HEK293 (cell line): ENCODE measurements at regions of chr17 and their contacts with region 1.

Region 1: DNA sequence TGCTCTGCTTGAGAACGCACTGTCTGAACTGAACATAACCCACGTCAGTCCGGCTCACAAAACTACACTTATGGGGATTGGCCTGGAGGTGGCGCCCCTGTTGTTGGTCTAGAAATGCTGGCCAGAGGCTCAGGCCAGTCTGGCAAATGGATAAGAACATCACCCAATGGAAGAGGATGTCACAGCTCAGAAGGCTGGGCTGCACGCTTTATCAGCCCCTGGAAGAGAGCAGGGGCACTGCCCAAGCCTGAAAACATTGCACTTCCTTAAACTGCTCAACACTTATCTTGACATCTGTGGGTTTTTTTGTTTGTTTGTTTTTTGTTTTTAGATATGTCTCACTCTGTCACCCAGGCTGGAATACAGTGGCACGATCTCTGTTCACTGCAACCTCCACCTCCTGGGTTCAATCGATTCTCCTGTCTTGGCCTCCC is 24.8 kb upstream of the BPTF start:
- H3K4me3 ChIP-seq: no peak overlapping the region
- H3K27ac ChIP-seq: no peak overlapping the region
- H3K4me1 ChIP-seq: no peaks in the 10 kb centered on the region
- CTCF ChIP-seq: peak; percentile 39; the same call in 1 of the 2 replicates

Region 2: DNA sequence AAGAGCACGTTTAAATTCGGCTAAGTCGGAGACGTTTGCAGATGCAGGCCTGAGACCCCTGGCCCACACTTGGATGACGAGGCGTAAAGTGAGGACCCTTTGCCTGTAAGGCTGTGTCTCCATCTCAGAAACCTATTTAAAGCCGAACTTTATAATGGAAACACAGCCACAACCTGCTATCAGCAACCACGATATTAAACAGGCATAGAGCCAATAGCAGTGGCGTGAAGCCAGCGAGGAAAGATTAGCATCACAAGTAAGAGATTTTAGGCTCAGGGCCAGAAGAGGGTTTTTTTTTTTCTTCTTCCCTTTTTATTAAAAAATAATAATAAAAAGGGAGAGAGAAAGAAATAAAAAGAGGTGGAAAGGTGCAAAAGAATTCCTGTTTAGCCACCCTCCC is 194.0 kb before region 1 on chr17:
- CTCF ChIA-PET with region 1: no interaction called
- POLR2A ChIA-PET with region 1: no interaction called
- H3K4me3 ChIP-seq: no peak overlapping the region
- H3K27ac ChIP-seq: no peak overlapping the region
- H3K4me1 ChIP-seq: peaks cover 13% of the 10 kb centered on the region
- CTCF ChIP-seq: no peak

Region 3: GRCh38 chr17:67682196-67682595 is 118.3 kb before region 1 on chr17:
- CTCF ChIA-PET with region 1: no interaction called
- POLR2A ChIA-PET with region 1: no interaction called
- H3K4me3 ChIP-seq: no peak overlapping the region
- H3K27ac ChIP-seq: no peak overlapping the region
- H3K4me1 ChIP-seq: no peaks in the 10 kb centered on the region
- CTCF ChIP-seq: no peak

Region 4: DNA sequence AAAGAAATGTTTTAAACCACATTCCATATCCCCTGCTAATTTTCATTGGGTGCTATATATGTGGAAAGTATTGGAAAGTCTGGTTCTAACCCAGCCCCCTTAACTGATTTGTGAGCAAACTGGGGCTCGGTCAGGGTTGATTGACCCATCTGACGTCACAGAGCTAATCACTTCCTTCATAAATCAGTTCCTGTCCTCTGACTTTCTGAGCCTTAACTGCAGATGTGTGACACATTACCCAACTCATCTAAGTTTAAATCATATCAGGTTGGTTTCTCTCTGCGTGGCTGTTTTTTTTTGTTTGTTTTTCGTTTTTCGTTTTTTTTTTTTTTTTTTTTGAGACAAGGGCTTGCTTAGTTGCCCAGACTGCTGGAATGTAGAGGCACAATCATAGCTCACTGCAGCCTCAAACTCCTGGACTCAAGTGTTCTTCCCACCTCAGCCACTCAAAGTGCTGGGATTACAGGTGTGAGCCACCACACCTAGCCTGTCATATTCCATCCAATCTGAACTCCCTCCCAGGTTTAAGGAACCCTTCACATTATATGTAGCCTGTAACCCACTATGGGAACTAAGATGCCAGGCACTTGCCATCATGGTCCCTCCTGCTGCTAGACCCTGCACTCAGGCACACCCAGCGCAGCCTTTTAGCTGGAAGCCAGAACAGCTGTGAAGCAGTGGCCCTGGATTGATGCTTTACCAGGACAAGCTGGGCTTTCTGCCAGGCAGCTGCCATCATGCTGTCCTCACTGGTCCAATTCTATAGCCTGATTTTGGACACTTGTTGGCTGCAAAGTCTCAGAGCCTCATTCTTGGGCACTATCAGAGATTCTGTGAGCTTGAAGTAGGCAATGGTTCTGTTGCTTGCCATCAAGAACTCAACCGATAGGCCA is 17.8 kb after region 1 on chr17:
- CTCF ChIA-PET with region 1: interaction called, 20 read pairs
- POLR2A ChIA-PET with region 1: no interaction called
- H3K4me3 ChIP-seq: no peak overlapping the region
- H3K27ac ChIP-seq: no peak overlapping the region
- H3K4me1 ChIP-seq: no peaks in the 10 kb centered on the region
- CTCF ChIP-seq: no peak

Region 5: GRCh38 chr17:67824735-67825626 is 24.5 kb after region 1 on chr17 and contains the start of gene BPTF:
- CTCF ChIA-PET with region 1: interaction called, 9 read pairs
- POLR2A ChIA-PET with region 1: interaction called, 10 read pairs
- H3K4me3 ChIP-seq: peak within 1 kb of the TSS; percentile 72
- H3K27ac ChIP-seq: peak within 1 kb of the TSS; percentile 87
- H3K4me1 ChIP-seq: peaks cover 10% of the 10 kb centered on the region
- CTCF ChIP-seq: peak; percentile 63

Region 6: DNA sequence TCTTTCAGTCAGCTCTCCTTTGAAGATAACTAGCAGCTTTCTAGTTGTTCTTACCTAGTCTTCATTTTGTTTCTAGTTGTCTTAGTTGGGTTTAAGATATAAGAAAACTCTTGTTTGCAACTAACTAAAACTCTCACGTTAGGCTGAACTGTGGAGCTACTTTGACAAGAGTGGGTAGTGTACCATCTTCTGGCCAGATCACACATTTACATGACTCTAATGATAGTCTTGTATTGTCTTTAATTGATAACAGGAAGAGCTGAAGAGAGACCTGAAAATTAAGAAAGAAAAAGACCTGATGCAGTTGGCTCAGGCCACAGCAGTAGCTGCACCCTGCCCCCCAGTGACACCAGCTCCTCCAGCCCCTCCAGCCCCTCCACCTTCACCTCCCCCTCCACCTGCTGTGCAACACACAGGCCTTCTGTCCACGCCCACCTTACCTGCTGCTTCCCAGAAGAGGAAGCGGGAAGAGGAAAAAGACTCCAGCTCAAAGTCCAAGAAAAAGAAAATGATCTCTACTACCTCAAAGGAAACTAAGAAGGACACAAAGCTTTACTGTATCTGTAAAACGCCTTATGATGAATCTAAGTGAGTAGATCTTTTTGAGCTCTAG is 158.9 kb after region 1 on chr17:
- CTCF ChIA-PET with region 1: interaction called, 13 read pairs
- POLR2A ChIA-PET with region 1: no interaction called
- H3K4me3 ChIP-seq: no peak overlapping the region
- H3K27ac ChIP-seq: no peak overlapping the region
- H3K4me1 ChIP-seq: no peaks in the 10 kb centered on the region
- CTCF ChIP-seq: no peak